Head of caudate nucleus (tissue), 42 donors: ENCODE measurements at regions of chr11 and their contacts with region 1.

Region 1: DNA sequence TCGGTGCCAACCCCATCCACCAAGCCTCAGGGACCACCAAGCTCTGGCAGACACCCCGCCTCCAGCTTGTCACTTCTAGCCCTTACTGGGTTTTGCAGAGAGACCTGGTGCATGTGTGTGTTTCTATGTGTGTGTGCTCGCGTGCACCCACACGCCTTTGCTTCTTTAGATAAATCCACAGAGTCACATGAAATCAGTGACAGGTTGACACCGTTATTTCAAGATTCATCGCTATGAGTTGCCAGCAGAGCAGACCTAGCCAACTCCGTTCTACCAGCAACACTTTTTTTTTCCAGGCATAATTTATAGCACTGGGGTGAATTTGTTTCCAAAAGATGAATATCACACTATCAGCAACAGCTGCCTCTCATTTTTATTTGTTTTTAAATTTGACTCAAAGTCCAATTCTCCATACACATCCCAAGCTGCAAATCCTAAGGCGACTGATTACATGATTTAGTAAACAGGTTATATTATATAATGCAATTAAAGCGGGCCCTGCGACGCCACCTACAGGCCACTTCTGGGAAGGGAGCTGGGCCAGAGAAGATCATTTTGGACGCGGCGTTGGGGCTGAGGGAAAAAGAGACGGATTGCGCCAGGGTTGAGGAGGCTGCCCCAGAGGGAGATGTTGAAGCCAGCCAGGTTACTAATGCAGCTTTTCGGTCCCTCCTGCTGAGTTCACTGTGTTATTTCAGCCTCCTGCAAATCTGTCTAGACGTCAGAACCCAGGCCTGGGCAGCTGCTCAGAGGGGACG is 150.5 kb downstream of the FEZ1 start:
- DNase-seq: peak; percentile 37 to 91 (median 78)

Region 2: DNA sequence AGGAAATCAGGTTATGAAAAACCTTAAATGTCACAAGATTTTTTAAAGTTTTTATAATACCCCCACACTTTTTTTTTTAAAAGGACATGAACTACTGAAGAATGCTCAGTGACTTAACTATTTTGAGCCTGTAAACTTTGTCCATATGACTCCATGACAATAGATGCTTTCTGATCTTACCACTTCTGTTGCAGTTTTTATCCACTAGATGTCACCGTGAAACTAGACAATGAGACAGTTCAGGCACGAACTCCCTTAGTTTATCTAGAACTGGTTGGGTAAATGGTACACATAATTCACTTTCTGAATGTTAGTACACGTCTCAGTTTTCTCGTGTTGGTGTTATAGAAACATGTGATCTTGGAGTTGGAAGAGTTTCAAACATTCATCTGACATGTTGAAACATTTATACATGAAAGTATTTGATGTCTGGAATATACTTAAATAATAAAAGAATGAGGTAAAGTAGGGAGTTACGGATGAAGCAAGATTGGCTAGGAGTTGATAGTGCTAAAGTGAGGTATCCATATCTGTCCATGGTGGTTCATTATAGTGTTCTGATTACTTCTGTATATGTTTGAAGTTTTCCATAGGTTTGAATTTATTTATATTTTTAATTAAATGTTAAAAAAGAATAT is 383.5 kb before region 1 on chr11:
- intact Hi-C with region 1: loop called (anchors 5 kb)
- DNase-seq: peak in 5 of 42 donors; percentile 25 to 76 (median 47)

Region 3: GRCh38 chr11:125164422-125165110 is 181.0 kb before region 1 on chr11 and contains the start of gene PKNOX2:
- intact Hi-C with region 1: loop called (anchors 5 kb)
- DNase-seq: peak; percentile 61 to 94 (median 86)

Region 4: GRCh38 chr11:125568970-125569914 is 223.6 kb after region 1 on chr11 and contains the start of gene EI24:
- intact Hi-C with region 1: no loop called
- DNase-seq: peak; percentile 79 to 97 (median 94)